HepG2 (cell line): ENCODE measurements at regions of chr4 and their contacts with region 1.

Region 1: GRCh38 chr4:156968479-156968984 is 3.1 kb downstream of the PDGFC start:
- DNase-seq: peak; percentile 55
- ATAC-seq: no peak
- H3K4me3 ChIP-seq: peak overlapping the region; percentile 24 to 82 (median 78); a peak in 5 of 6 replicates
- H3K27ac ChIP-seq: no peak overlapping the region
- H3K4me1 ChIP-seq: peaks cover 45% of the 10 kb centered on the region
- H3K27me3 ChIP-seq: no peaks in the 10 kb centered on the region; a peak in 1 of 5 replicates
- CTCF ChIP-seq: peak; percentile 76
- EP300 ChIP-seq: no peak
- POLR2A ChIP-seq: no peak
- RAD21 ChIP-seq: peak; percentile 65; the same call in 1 of the 2 replicates

Region 2: DNA sequence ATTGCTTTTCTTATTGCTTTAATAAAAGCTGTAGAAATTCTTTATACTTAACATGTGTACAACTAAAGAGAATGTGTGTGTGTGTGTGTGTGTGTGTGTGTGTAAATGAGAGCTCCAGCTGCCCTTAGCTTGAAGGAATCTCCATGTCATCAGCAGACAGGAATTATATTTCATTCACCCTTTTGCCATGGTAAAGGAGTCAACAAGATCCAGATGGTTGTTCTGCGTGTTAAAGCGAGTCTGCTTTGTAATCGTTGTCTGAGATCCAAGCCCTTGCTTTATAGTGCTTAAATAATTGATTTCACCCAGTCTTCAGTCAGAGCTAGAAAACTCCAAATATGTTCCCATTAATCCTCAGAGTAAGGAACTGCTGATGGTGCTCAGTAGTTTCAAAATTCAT is 282.4 kb before region 1 on chr4:
- CTCF ChIA-PET with region 1: no interaction called
- POLR2A ChIA-PET with region 1: no interaction called
- in situ Hi-C with region 1: loop called (anchors 10 kb)
- intact Hi-C with region 1: loop called (anchors 10 kb)
- DNase-seq: no peak
- ATAC-seq: no peak
- H3K4me3 ChIP-seq: no peak overlapping the region
- H3K27ac ChIP-seq: no peak overlapping the region
- H3K4me1 ChIP-seq: no peaks in the 10 kb centered on the region
- H3K27me3 ChIP-seq: no peaks in the 10 kb centered on the region
- CTCF ChIP-seq: no peak
- EP300 ChIP-seq: no peak
- POLR2A ChIP-seq: no peak
- RAD21 ChIP-seq: no peak

Region 3: DNA sequence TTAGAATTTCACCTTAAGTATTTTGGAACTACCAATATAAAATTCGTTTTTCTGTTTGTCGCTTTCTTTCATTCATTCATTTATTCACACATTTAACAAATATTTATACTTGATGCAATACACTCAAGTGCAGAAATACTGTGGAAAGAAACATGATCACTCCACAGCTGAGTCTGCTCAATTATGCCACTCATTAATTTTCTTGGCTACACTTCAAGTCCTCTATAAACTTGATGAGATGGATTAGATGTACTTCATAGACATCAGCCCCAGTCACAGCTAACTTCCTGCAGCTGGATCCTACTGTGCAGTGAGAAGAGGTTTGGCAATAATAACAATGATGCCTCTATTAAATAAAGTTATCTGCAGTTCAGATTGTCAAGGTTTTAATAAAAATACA is 205.0 kb before region 1 on chr4:
- CTCF ChIA-PET with region 1: no interaction called
- POLR2A ChIA-PET with region 1: no interaction called
- in situ Hi-C with region 1: loop called (anchors 10 kb)
- intact Hi-C with region 1: no loop called
- DNase-seq: no peak
- ATAC-seq: no peak
- H3K4me3 ChIP-seq: no peak overlapping the region
- H3K27ac ChIP-seq: no peak overlapping the region
- H3K4me1 ChIP-seq: peaks cover 23% of the 10 kb centered on the region
- H3K27me3 ChIP-seq: no peaks in the 10 kb centered on the region
- CTCF ChIP-seq: no peak
- EP300 ChIP-seq: no peak
- POLR2A ChIP-seq: no peak
- RAD21 ChIP-seq: no peak

Region 4: GRCh38 chr4:156865451-156865850 is 103.1 kb before region 1 on chr4:
- CTCF ChIA-PET with region 1: no interaction called
- POLR2A ChIA-PET with region 1: no interaction called
- in situ Hi-C with region 1: no loop called
- intact Hi-C with region 1: loop called (anchors 5 kb)
- DNase-seq: no peak
- ATAC-seq: no peak
- H3K4me3 ChIP-seq: no peak overlapping the region
- H3K27ac ChIP-seq: no peak overlapping the region
- H3K4me1 ChIP-seq: no peaks in the 10 kb centered on the region
- H3K27me3 ChIP-seq: no peaks in the 10 kb centered on the region
- CTCF ChIP-seq: no peak
- EP300 ChIP-seq: no peak
- POLR2A ChIP-seq: no peak
- RAD21 ChIP-seq: no peak

Region 5: DNA sequence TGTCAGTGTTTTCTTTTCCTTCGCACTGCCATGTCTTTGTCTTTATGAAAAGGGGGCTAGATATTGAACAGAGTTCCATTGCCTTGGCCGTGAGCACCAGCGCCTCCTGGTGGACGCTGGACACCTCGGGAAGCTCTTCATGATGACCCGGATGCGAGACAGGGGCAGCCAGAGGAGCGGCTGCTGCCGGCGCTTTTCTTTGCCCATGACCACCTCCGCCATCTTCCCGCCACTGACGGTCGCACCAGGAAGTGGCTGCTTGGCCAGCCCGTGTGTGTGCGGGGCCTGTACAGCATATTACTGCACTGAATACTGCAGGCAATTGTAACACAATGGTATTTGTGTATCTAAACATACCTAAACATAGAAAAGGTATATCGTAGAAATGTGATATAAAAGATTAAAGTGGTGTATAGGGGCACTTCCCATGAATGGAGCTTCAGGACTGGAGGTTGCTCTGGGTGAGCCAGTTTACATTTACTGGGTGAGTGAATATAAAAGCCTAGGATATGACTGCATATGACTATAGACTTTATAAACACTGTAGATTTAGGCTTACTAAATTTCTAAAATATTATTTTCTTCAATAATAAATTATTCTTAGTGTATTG is 236.2 kb after region 1 on chr4:
- CTCF ChIA-PET with region 1: no interaction called
- POLR2A ChIA-PET with region 1: no interaction called
- in situ Hi-C with region 1: no loop called
- intact Hi-C with region 1: loop called (anchors 10 kb)
- DNase-seq: peak; percentile 24
- ATAC-seq: peak; percentile 94
- H3K4me3 ChIP-seq: no peak overlapping the region
- H3K27ac ChIP-seq: no peak overlapping the region
- H3K4me1 ChIP-seq: no peaks in the 10 kb centered on the region
- H3K27me3 ChIP-seq: no peaks in the 10 kb centered on the region; a peak in 1 of 5 replicates
- CTCF ChIP-seq: peak; percentile 70
- EP300 ChIP-seq: no peak
- POLR2A ChIP-seq: no peak
- RAD21 ChIP-seq: no peak

Region 6: GRCh38 chr4:157300701-157301100 is 332.2 kb after region 1 on chr4:
- CTCF ChIA-PET with region 1: no interaction called
- POLR2A ChIA-PET with region 1: no interaction called
- in situ Hi-C with region 1: no loop called
- intact Hi-C with region 1: no loop called
- DNase-seq: no peak
- ATAC-seq: no peak
- H3K4me3 ChIP-seq: no peak overlapping the region
- H3K27ac ChIP-seq: no peak overlapping the region
- H3K4me1 ChIP-seq: no peaks in the 10 kb centered on the region
- H3K27me3 ChIP-seq: no peaks in the 10 kb centered on the region
- CTCF ChIP-seq: no peak
- EP300 ChIP-seq: no peak
- POLR2A ChIP-seq: no peak
- RAD21 ChIP-seq: no peak